ENCODE measurements at regions of chr6 and their contacts with region 1.

Region 1: GRCh38 chr6:88584581-88585275 is 378.7 kb downstream of the RNGTT start:
- DNase-seq: no peak
- ATAC-seq: peak; percentile 21; the same call in 1 of the 2 replicates
- H3K4me3 Mint-ChIP-seq: no peak overlapping the region
- H3K27ac Mint-ChIP-seq: no peak overlapping the region
- H3K4me1 Mint-ChIP-seq: peaks cover 37% of the 10 kb centered on the region
- H3K27me3 Mint-ChIP-seq: peaks cover 7% of the 10 kb centered on the region
- CTCF ChIP-seq: no peak

Region 2: GRCh38 chr6:88566746-88567534 is 17.8 kb before region 1 on chr6:
- CTCF ChIA-PET with region 1: interaction called, 10 read pairs
- POLR2A ChIA-PET with region 1: no interaction called
- DNase-seq: no peak
- ATAC-seq: peak; percentile 69
- H3K4me3 Mint-ChIP-seq: no peak overlapping the region
- H3K27ac Mint-ChIP-seq: no peak overlapping the region
- H3K4me1 Mint-ChIP-seq: peaks cover 11% of the 10 kb centered on the region
- H3K27me3 Mint-ChIP-seq: no peaks in the 10 kb centered on the region; the same call in 1 of the 2 replicates
- CTCF ChIP-seq: no peak

Measured in WTC11 (cell line).